ENCODE measurements at regions of chr10 and their contacts with region 1.

Region 1: DNA sequence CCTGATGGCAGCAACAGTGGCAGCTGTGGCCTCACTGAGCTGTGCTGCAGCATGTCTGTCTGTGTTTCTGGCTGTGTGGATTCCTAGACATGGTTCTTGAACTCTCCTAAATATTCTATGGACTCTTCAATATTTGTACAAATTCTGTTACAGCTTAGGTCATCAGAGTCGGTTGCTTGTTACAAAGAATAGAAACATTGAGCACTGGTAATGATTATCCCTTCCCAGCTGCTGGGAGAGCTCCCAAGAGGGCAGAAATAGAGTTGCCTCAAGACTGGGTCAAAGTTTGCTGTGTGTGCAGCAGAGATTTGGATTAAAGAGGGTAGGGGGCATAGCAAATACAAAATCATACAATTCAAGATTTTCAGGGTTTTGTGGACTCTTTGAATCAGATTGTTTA is 337.1 kb upstream of the AKR1E2 start:
- DNase-seq: no peak
- ATAC-seq: no peak
- H3K4me3 ChIP-seq: no peak overlapping the region
- H3K27ac ChIP-seq: no peak overlapping the region
- H3K4me1 ChIP-seq: peaks cover 0 to 4% (median 0%) of the 10 kb centered on the region in 12 donors
- H3K27me3 ChIP-seq: no peaks in the 10 kb centered on the region
- CTCF ChIP-seq: no peak
- POLR2A ChIP-seq: no peak

Region 2: GRCh38 chr10:4013651-4014121 is 475.2 kb before region 1 on chr10:
- intact Hi-C with region 1: no loop called
- DNase-seq: peak in 3 of 5 donors; percentile 16 to 43 (median 30)
- ATAC-seq: peak; percentile 12 to 77 (median 48)
- H3K4me3 ChIP-seq: peak overlapping the region in 3 of 12 donors; percentile 7 to 21 (median 18)
- H3K27ac ChIP-seq: peak overlapping the region in 1 of 12 donors; percentile 11
- H3K4me1 ChIP-seq: peaks cover 0 to 22% (median 0%) of the 10 kb centered on the region in 12 donors
- H3K27me3 ChIP-seq: no peaks in the 10 kb centered on the region
- CTCF ChIP-seq: no peak
- POLR2A ChIP-seq: no peak

Region 3: GRCh38 chr10:4303048-4303447 is 185.9 kb before region 1 on chr10:
- intact Hi-C with region 1: no loop called
- DNase-seq: no peak
- ATAC-seq: peak in 1 of 4 donors; percentile 28
- H3K4me3 ChIP-seq: no peak overlapping the region
- H3K27ac ChIP-seq: no peak overlapping the region
- H3K4me1 ChIP-seq: peaks cover 0 to 22% (median 6%) of the 10 kb centered on the region in 12 donors
- H3K27me3 ChIP-seq: no peaks in the 10 kb centered on the region
- CTCF ChIP-seq: no peak
- POLR2A ChIP-seq: no peak

Region 4: GRCh38 chr10:4429571-4429970 is 59.3 kb before region 1 on chr10:
- intact Hi-C with region 1: loop called in 1 of 10 experiments (anchors 10 kb)
- DNase-seq: no peak
- ATAC-seq: no peak
- H3K4me3 ChIP-seq: no peak overlapping the region
- H3K27ac ChIP-seq: no peak overlapping the region
- H3K4me1 ChIP-seq: peaks cover 0 to 11% (median 0%) of the 10 kb centered on the region in 12 donors
- H3K27me3 ChIP-seq: no peaks in the 10 kb centered on the region
- CTCF ChIP-seq: no peak
- POLR2A ChIP-seq: no peak

Region 5: DNA sequence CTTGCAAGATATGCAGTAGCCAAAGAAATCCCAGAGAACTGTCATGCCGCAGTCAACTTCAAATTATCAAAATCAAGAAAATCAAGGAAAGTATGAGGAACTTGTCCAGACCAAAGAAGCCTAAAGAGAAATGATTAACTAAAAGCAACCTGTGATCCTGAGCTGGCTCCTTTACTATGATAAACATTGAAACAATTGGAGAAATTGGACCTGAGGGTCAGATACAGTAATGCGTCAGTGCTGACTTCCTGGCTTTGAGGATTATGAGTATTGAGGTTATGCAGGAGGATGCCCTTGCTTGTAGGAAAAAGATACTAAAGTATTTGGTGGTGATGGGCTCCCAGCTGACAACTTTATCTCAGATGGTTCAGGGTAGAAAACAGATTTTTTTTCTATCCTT is 12.4 kb after region 1 on chr10:
- intact Hi-C with region 1: no loop called
- DNase-seq: no peak
- ATAC-seq: no peak
- H3K4me3 ChIP-seq: no peak overlapping the region
- H3K27ac ChIP-seq: no peak overlapping the region
- H3K4me1 ChIP-seq: peaks cover 0 to 24% (median 19%) of the 10 kb centered on the region in 12 donors
- H3K27me3 ChIP-seq: no peaks in the 10 kb centered on the region
- CTCF ChIP-seq: no peak
- POLR2A ChIP-seq: no peak

Region 6: DNA sequence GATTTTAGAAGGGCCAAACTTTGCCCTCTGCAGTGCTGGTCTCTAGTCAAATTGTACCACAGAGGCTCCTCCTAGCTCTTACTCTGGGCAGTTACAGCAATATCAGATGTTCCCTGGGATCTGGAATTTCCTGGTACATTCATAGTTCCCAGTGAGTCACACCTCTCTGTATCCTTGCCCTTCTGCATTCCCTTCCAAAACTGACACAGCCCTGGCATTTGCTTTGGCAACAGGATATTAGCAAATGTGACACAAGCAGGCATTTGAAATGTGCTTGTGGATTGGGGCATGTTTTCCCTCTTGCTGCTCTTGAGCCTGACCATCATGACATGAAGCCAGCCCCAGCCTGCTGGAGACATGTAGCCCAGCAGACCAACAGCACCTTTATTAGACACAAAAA is 52.4 kb after region 1 on chr10:
- intact Hi-C with region 1: no loop called
- DNase-seq: no peak
- ATAC-seq: peak; percentile 20 to 76 (median 64)
- H3K4me3 ChIP-seq: no peak overlapping the region
- H3K27ac ChIP-seq: no peak overlapping the region
- H3K4me1 ChIP-seq: no peaks in the 10 kb centered on the region
- H3K27me3 ChIP-seq: no peaks in the 10 kb centered on the region
- CTCF ChIP-seq: no peak
- POLR2A ChIP-seq: no peak